Ascending aorta (tissue), 2 donors: ENCODE measurements at regions of chr6 and their contacts with region 1.

Region 1: GRCh38 chr6:131960371-131961133 is 9.4 kb upstream of the CCN2 start:
- DNase-seq: no peak
- H3K4me3 ChIP-seq: no peak overlapping the region
- H3K27ac ChIP-seq: no peak overlapping the region
- H3K4me1 ChIP-seq: peaks cover 0 to 9% of the 10 kb centered on the region in 2 donors
- H3K27me3 ChIP-seq: no peaks in the 10 kb centered on the region
- CTCF ChIP-seq: peak in 2 of 3 experiments; percentile 11 to 39

Region 2: DNA sequence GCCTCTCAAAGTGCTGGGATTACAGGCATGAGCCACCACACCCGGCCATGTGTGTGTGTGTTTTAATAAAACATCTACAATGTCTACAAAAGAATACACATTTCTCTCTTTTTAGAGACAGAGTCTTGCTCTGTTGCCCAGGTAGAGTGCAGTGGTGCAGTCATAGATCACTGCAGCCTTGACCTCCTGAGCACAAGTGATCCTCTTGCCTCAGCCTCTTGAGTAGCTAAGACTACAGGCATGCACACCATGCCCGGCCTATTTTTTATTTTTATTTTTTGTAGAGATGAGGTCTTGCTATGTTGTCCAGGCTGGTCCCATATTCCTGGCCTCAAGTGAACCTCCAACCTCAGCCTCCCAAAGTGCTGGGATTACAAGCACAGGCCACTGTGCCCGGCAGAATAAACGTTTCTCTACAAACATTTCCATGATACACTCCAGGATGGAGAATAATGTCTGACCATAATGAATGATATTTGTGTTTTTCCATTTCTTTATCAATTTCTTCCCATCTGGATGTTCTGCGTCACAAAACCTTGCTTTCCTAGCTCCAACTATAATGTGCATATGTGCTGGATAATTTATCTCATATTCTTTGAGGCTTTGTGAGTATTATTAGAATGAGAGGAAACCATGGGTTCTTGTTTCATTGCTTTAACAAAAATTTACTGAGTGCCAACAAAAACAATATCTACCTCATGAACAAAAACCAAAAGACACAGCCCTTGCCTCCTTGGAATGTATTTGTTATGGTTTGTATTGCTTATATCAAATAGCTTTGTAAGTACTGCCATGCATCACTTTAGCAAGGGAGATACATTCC is 19.2 kb after region 1 on chr6:
- intact Hi-C with region 1: loop called (anchors 2 kb)
- DNase-seq: no peak
- H3K4me3 ChIP-seq: no peak overlapping the region
- H3K27ac ChIP-seq: no peak overlapping the region
- H3K4me1 ChIP-seq: peaks cover 0 to 29% of the 10 kb centered on the region in 2 donors
- H3K27me3 ChIP-seq: no peaks in the 10 kb centered on the region
- CTCF ChIP-seq: no peak

Region 3: DNA sequence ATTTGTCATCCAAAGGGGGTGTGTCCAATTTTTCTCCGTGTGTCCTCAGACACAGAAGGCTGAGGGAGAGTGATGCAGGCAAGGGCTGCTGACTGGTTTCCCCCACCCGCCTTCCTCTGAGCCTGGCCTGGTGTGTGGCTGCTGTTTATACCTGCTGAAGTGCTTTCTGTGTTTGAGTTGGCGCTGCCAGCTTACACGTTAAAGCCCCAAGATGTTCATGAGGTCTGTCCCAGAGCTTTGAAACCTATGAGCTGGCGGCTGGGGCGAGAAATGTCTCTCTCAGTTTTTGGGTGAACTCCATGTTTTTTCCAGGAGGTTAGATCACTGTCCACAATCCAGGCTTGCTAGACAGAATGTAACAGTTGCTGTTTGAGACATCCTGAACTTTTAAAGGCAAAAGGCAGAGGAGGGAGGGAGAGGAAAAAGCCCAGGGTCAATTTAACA is 59.6 kb after region 1 on chr6:
- intact Hi-C with region 1: no loop called
- DNase-seq: peak; percentile 55 to 84
- H3K4me3 ChIP-seq: no peak overlapping the region
- H3K27ac ChIP-seq: peak overlapping the region; percentile 73 to 82
- H3K4me1 ChIP-seq: peaks cover 0 to 10% of the 10 kb centered on the region in 2 donors
- H3K27me3 ChIP-seq: no peaks in the 10 kb centered on the region
- CTCF ChIP-seq: no peak